Head of caudate nucleus (tissue), 42 donors: ENCODE measurements at regions of chr2 and their contacts with region 1.

Region 1: DNA sequence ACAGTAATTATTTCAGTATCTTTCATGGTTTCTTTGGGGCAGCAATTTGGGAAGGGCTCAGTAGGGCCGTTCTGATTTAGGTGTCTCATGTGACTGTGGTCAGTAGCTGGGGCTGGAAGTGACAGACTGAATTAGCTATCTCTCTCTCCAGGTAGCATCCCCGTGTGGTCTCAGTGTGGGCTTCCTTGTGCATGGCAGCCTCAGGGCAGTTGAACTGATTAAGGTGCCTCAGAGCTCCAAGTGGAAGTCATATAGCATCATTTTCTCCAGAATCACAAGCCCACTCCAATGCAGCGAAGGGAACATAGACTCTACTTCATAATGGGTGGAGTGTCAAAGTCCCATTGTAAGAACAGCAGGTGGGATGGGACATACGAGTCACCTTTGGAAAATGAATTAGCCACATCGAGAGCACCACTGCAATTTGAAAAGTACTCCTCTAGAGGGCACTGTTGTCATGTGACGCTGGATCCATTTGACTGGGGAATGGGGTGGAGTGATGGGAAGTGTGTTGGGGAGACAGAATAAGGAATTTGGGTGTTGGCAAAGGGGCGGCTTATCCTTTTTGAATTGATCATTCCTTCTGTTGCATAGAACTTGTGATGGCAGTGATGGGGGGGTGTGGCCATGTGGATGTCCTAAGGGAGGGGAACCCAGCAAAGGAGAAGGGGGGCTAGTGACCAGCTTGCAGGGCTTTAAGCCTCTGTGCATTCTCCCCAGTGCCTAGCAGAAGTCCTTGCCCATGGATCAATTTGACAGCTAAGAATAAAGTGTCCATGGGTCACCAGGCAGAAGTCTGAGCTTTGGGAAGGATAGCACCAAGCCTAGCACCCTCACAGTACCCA is 39.3 kb upstream of the FAM136A start:
- DNase-seq: peak in 35 of 42 donors; percentile 6 to 78 (median 47)

Region 2: DNA sequence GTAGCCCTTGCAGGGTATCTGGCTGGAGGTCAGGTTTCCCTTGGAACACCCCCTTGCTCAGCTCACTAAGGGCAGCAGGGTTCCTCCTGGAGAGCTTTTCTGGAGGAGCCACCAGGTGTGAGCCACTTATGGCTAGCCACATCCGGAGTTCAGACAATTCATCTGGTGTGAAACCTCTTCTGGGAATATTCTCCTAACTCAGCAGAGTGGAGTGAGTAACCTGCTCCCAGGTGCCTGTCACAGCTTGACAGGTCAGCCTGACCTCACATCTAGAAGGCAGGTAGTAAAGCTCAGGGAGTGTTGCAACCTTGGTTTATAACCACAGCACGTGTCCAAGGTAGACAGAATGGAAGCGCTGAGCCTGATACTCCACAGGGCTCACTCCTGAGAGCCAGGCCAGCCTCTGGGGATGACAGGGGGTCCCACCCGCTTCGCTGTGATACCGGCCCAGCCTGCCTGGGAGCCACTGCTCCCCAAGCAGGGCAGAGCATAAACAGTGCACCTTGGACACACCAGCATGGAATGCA is 275.1 kb after region 1 on chr2:
- intact Hi-C with region 1: loop called (anchors 5 kb)
- DNase-seq: no peak